ENCODE measurements at regions of chr1 and their contacts with region 1.

Region 1: GRCh38 chr1:165317612-165318011 is 38.9 kb downstream of the LMX1A start:
- DNase-seq: no peak
- ATAC-seq: no peak
- H3K4me3 ChIP-seq: no peak overlapping the region
- H3K27ac ChIP-seq: no peak overlapping the region
- H3K4me1 ChIP-seq: no peaks in the 10 kb centered on the region
- H3K27me3 ChIP-seq: peaks cover 68% of the 10 kb centered on the region
- CTCF ChIP-seq: no peak
- POLR2A ChIP-seq: no peak
- RAD21 ChIP-seq: no peak

Region 2: GRCh38 chr1:165330483-165330882 is 12.9 kb after region 1 on chr1:
- CTCF ChIA-PET with region 1: no interaction called
- POLR2A ChIA-PET with region 1: no interaction called
- RAD21 ChIA-PET with region 1: no interaction called
- intact Hi-C with region 1: loop called (anchors 1 kb)
- DNase-seq: no peak
- ATAC-seq: no peak
- H3K4me3 ChIP-seq: no peak overlapping the region
- H3K27ac ChIP-seq: no peak overlapping the region
- H3K4me1 ChIP-seq: no peaks in the 10 kb centered on the region
- H3K27me3 ChIP-seq: peaks cover 48% of the 10 kb centered on the region
- CTCF ChIP-seq: no peak
- POLR2A ChIP-seq: no peak
- RAD21 ChIP-seq: no peak

Region 3: DNA sequence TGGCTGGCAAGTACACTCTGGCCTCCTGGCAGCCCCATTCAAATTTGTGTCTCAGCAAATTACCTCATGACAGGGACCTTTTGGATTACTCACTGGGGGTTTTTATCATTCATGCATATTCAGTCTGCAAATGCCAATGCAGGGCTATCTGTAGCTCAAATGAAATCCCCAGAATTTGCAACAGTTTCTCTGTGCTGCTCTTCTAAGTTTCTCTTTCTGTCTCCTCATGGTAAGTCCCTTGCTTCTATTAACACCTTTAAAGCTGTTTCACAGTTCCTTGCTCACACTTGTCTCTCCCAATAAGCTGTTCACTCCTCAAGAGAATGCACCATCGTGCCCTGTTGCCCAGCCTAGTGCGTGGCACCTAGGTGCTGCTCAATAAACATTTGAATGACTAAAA is 852.5 kb after region 1 on chr1:
- CTCF ChIA-PET with region 1: no interaction called
- POLR2A ChIA-PET with region 1: no interaction called
- RAD21 ChIA-PET with region 1: no interaction called
- intact Hi-C with region 1: no loop called
- DNase-seq: no peak
- ATAC-seq: no peak
- H3K4me3 ChIP-seq: no peak overlapping the region
- H3K27ac ChIP-seq: no peak overlapping the region
- H3K4me1 ChIP-seq: peaks cover 0 to 40% of the 10 kb centered on the region in 2 experiments; a peak in 3 of 4 replicates
- H3K27me3 ChIP-seq: 0 out of 2 replicates have a peak, but pooled peaks cover 6% of the 10 kb centered on the region
- CTCF ChIP-seq: no peak
- POLR2A ChIP-seq: no peak
- RAD21 ChIP-seq: no peak